Vagina (tissue), 2 donors: ENCODE measurements at regions of chr17 and their contacts with region 1.

Region 1: DNA sequence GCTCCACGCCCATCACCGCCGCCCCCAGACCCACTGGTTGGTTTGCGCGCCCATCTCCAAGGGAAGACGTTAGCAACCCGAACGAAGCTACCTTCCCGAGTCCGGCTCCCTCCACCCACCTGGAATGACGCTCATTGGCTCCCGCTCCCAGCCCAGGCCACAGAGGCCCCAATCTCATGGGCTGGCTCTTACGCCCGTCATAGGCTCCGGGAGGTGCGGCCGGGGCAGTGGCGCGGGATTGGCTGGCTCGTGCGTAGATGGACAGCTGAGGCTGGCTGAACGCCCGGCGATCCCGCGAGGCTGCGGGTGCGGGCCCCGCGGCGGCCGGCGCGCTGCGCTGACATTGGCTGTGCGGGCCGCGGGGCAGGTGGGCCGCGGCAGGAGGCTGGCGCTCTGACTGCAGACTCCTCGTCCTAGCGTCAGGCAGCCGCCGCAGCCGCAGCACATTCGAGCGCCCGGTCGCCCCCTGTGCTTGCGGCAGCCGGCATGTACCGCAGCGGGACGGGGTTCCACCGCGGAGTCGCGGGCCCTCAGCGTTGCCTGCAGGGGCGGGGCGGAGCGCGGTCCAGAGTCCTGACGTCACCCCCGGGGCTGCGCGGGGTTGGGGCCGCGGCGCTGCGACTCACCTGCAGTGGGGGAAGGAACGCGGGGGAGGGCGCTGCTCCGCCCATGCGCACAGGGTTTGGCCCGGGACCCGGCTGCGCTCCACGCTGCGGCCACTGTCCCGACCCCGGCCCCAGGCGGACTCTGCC is 453 bp upstream of the MYH10 start:
- DNase-seq: peak in 1 of 2 donors; percentile 98
- H3K4me3 ChIP-seq: peak overlapping the region; percentile 74 to 83
- H3K27ac ChIP-seq: peak overlapping the region; percentile 57
- H3K4me1 ChIP-seq: peaks cover 21% of the 10 kb centered on the region
- H3K27me3 ChIP-seq: no peaks in the 10 kb centered on the region
- CTCF ChIP-seq: no peak
- POLR2A ChIP-seq: no peak

Region 2: DNA sequence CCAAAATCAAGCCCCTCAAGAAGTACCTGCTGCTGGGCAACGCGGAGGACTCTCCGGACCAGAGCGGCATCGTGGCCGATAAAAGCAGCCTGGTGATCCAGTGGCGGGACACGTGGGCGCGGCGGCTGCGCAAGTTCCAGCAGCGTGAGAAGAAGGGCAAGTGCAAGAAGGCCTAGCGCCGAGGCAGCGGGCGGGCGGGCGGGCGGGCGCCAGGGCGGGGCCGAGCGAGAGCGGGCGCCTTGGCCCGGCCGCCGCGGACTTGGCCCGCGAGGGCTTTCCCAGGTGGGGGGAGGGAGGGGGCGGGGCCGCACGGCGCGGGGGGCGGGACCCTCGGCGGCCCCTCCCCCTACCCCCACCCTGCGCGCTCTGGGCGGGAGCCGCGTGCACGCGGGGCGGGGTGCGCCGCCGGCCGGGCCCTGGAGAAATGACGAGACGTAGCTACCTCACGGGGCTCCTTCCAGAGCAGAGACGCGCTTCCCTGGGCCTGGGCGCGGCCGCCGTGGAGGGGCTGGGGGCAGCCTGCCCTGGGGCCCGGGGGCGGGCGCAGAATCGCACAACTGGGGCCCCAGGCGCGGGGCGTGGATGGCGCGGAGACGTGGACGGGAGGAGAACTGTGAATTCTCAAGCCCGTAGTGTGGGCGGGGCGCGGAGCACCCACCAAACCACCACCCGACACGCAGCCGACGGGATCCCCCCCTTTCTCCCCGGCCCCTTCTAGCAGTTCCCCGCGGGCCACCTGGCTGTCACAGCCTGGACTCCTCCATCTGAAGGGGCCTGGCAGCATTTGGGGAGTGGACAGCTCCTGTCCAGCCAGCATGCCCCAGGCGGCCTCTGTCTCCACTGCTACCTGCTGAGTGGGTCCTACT is 609.0 kb after region 1 on chr17:
- intact Hi-C with region 1: loop called (anchors 5 kb)
- DNase-seq: no peak
- H3K4me3 ChIP-seq: peak overlapping the region; percentile 52 to 77
- H3K27ac ChIP-seq: peak overlapping the region; percentile 97
- H3K4me1 ChIP-seq: peaks cover 60% of the 10 kb centered on the region
- H3K27me3 ChIP-seq: no peaks in the 10 kb centered on the region
- CTCF ChIP-seq: no peak
- POLR2A ChIP-seq: peak in 1 of 2 donors; percentile 80